Activated B cell treated with CpG ODN at 0.5 μM for 24 hours (primary cell): ENCODE measurements at regions of chr15 and their contacts with region 1.

Region 1: DNA sequence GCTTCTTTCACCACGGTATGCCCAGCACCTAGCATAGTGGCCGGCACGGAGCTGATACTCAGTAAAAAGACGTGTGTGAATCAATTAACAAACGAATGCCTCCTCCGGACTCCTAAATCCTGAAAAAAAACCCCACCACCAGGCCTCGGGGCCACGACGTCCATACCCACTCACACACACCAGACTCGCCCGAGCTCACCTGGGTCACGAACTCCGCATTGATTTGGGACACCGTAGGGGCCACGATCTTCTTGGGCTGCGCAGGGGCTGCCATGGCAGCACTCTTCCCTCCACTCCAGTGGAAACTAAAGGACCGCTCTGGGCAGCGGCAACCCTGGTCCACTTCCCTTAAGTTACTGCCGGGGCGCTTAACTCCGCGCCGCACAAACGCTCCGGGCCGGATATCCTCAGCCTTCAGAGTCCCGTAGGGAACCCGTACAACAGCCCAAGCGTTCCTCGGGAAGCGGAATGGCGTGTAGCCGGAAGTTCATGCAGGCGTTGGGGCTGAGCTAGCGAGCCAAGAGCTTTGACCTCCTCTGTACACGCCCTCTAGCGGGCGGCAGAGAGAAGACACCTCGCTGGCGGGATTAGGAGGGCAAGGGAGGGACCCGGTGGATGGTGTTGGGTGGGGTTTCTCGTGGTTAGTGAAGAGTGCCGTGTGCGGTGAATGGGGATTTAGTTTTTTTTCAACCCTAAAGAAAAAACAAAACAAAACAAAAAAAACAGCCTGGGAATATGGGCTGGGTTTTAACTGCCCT is at the start of gene AQR:
- DNase-seq: peak; percentile 75
- ATAC-seq: peak; percentile 98
- H3K4me3 Mint-ChIP-seq: peak within 1 kb of the TSS; percentile 98
- H3K27ac Mint-ChIP-seq: peak within 1 kb of the TSS; percentile 93
- H3K4me1 Mint-ChIP-seq: peaks cover 35% of the 10 kb centered on the region
- H3K27me3 Mint-ChIP-seq: no peaks in the 10 kb centered on the region
- CTCF ChIP-seq: no peak
- total RNA-seq, gene AQR: 43.3 and 48.6 TPM in 2 replicates

Region 2: GRCh38 chr15:34904527-34904926 is 65.0 kb before region 1 on chr15:
- CTCF ChIA-PET with region 1: no interaction called
- POLR2A ChIA-PET with region 1: no interaction called
- intact Hi-C with region 1: loop called (anchors 2 kb)
- DNase-seq: no peak
- ATAC-seq: no peak
- H3K4me3 Mint-ChIP-seq: no peak overlapping the region
- H3K27ac Mint-ChIP-seq: no peak overlapping the region
- H3K4me1 Mint-ChIP-seq: no peaks in the 10 kb centered on the region
- H3K27me3 Mint-ChIP-seq: no peaks in the 10 kb centered on the region
- CTCF ChIP-seq: no peak

Region 3: GRCh38 chr15:34927726-34928125 is 41.8 kb before region 1 on chr15:
- CTCF ChIA-PET with region 1: no interaction called
- POLR2A ChIA-PET with region 1: no interaction called
- intact Hi-C with region 1: loop called (anchors 5 kb)
- DNase-seq: no peak
- ATAC-seq: no peak
- H3K4me3 Mint-ChIP-seq: no peak overlapping the region
- H3K27ac Mint-ChIP-seq: no peak overlapping the region
- H3K4me1 Mint-ChIP-seq: no peaks in the 10 kb centered on the region
- H3K27me3 Mint-ChIP-seq: no peaks in the 10 kb centered on the region
- CTCF ChIP-seq: no peak

Region 4: GRCh38 chr15:34987985-34988873 is 18.7 kb after region 1 on chr15 and contains the start of gene ZNF770:
- CTCF ChIA-PET with region 1: interaction called, 31 read pairs
- POLR2A ChIA-PET with region 1: interaction called, 176 read pairs
- intact Hi-C with region 1: loop called (anchors 1 kb)
- DNase-seq: peak; percentile 92
- ATAC-seq: peak; percentile 85
- H3K4me3 Mint-ChIP-seq: peak within 1 kb of the TSS; percentile 98
- H3K27ac Mint-ChIP-seq: peak within 1 kb of the TSS; percentile 98
- H3K4me1 Mint-ChIP-seq: peaks cover 37% of the 10 kb centered on the region
- H3K27me3 Mint-ChIP-seq: no peaks in the 10 kb centered on the region
- CTCF ChIP-seq: no peak
- total RNA-seq, gene ZNF770: 46.8 TPM in 2 replicates

Region 5: DNA sequence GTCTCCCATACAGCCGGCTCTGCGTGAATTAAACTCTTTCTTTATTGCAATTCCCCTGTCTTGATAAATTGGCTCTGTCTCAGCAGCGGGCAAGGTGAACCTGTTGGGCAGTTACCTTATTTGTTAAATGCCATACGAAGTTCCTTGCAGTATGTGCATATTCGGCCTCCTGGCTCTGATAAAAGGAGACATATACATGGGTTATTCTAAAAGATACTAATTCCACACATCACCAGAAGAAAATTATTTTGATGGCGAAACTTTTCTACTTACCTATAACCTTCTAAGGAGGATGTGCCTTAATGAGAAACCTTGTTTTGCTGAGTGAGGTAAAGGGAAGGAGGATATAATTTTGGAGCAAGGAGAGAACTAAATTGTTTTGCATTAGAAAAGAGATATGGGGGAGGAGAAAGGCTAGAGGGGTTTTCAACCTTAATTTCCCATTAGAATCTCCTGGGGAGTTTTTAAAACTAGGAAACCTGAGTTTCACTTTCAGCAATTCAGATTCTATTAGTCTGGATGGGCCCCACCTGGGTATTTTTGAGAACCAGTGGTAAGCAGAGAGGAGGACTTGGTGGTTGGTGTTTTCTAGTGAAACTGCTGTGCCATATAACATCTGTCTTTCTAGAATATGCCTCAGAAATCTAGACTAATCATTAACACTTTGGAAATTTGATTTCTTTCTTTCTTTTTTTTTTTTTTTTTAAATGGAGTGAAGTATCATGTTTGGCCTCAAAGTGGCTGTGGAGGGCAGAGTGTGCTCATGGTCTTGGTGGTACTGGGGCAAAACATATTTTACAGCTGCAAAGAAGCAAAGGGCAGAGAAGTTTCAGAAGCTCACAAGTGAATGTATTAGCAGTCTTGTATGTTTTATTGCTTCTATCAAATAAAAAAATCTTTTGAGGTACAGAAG is 92.6 kb after region 1 on chr15:
- CTCF ChIA-PET with region 1: no interaction called
- POLR2A ChIA-PET with region 1: no interaction called
- intact Hi-C with region 1: no loop called
- DNase-seq: no peak
- ATAC-seq: no peak
- H3K4me3 Mint-ChIP-seq: no peak overlapping the region
- H3K27ac Mint-ChIP-seq: no peak overlapping the region
- H3K4me1 Mint-ChIP-seq: no peaks in the 10 kb centered on the region
- H3K27me3 Mint-ChIP-seq: no peaks in the 10 kb centered on the region
- CTCF ChIP-seq: no peak